ENCODE measurements at regions of chr1 and their contacts with region 1.

Region 1: DNA sequence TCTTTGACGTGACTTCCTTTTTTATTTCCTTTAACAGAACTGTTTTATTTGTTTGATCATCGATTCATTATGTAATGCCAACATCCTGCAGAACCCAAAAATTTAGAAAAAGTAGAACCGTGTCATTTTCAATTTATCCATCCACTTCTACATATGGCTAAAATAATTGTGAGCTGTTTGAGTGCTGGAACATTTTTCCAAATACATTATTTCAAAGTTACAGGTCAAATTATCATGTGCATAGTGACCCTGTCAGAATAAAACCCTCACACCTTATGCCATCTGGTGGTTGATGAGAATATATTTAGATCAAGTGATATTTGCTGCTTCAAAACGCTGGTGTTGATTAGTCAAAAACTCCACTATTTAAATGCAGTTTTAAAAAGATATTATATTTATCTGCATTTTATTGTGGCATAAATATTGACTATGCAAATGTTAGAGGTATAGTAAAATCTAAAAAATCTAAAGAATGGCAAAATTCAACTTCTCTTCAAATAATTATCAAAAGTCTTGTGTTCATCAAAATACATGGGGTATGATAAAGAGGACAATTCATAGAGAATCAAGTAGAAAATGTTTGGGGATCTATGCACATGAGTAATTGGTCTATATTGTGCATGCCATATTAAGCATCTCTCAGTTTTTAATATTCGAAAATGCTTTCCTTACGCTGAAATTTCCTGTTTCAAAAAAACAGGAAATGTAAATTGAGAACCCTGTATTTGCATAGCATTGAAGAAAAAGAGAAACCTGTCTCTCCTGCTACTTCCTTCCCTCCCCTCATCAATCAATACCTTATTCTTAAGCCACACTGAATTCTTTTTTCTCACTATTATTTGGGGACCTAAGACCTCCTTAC is 39.7 kb downstream of the UBE2U start:
- DNase-seq: no peak
- H3K4me3 ChIP-seq: no peak overlapping the region
- H3K27ac ChIP-seq: no peak overlapping the region
- H3K4me1 ChIP-seq: no peaks in the 10 kb centered on the region
- H3K27me3 ChIP-seq: no peaks in the 10 kb centered on the region
- CTCF ChIP-seq: no peak

Region 2: DNA sequence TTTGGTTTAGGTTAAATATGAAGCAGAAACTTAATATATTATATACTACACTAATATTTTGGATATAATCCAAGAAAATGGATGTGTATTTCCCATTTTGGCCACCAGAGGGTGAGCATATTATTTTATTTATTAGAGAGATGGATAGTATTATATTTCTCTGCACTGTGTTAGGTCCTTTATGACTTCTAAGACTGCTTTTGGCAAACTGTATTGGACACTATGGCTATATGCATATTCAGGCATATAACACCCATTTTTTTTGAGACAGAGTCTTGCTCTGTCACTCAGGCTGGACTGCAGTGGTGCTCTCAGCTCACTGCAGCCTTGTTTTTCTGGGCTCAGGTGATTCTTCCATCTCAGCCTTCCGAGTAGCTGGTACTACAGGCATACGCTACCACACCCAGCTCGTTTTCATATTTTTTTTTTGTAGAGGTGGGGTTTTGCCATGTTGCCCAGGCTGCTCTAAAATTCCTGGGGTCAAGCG is 667.7 kb before region 1 on chr1:
- intact Hi-C with region 1: loop called (anchors 10 kb)
- DNase-seq: no peak
- H3K4me3 ChIP-seq: no peak overlapping the region
- H3K27ac ChIP-seq: no peak overlapping the region
- H3K4me1 ChIP-seq: no peaks in the 10 kb centered on the region
- H3K27me3 ChIP-seq: no peaks in the 10 kb centered on the region
- CTCF ChIP-seq: peak; percentile 82

Region 3: DNA sequence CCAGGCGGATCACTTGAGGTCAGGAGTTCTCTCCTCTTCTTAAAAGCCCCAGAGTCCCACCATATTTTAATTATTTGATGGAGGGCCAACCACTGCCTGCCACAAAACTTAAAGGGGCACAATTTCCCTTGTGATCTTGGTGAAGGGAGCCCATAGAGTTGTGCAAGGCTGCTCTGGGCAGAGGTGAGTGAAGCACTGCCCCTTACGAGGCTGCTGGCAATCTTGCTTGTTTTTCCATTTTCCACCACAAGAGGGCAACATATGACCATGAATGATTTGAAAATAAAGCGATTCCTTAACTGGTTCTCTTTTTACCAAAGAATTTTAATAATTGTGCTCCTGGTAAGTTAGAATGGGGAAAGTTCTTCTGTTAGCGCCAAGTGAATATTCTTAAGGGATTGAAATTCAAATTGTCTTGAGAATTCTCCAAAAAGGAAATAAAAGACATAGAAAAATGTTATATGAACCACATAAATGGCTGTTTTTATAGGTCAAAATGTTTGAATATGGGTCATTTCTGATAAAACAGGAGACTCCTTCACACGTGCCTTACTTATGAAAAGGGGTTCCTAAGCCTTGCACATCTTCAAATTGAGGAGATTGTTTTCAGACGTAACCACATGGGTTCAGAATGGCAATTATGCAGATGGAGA is 627.2 kb before region 1 on chr1:
- intact Hi-C with region 1: loop called (anchors 2 kb)
- DNase-seq: peak; percentile 79
- H3K4me3 ChIP-seq: no peak overlapping the region
- H3K27ac ChIP-seq: no peak overlapping the region
- H3K4me1 ChIP-seq: no peaks in the 10 kb centered on the region
- H3K27me3 ChIP-seq: no peaks in the 10 kb centered on the region
- CTCF ChIP-seq: peak; percentile 76

Region 4: GRCh38 chr1:63674238-63674864 is 568.8 kb before region 1 on chr1:
- intact Hi-C with region 1: loop called (anchors 5 kb)
- DNase-seq: peak; percentile 84
- H3K4me3 ChIP-seq: no peak overlapping the region
- H3K27ac ChIP-seq: peak overlapping the region; percentile 20
- H3K4me1 ChIP-seq: peaks cover 3% of the 10 kb centered on the region
- H3K27me3 ChIP-seq: no peaks in the 10 kb centered on the region
- CTCF ChIP-seq: peak; percentile 54

Region 5: GRCh38 chr1:64282354-64282753 is 39.2 kb after region 1 on chr1:
- intact Hi-C with region 1: no loop called
- DNase-seq: no peak
- H3K4me3 ChIP-seq: no peak overlapping the region
- H3K27ac ChIP-seq: no peak overlapping the region
- H3K4me1 ChIP-seq: no peaks in the 10 kb centered on the region
- H3K27me3 ChIP-seq: no peaks in the 10 kb centered on the region
- CTCF ChIP-seq: no peak

Measured in colonic mucosa (tissue), 4 donors.